ENCODE measurements at regions of chr1 and their contacts with region 1.

Region 1: DNA sequence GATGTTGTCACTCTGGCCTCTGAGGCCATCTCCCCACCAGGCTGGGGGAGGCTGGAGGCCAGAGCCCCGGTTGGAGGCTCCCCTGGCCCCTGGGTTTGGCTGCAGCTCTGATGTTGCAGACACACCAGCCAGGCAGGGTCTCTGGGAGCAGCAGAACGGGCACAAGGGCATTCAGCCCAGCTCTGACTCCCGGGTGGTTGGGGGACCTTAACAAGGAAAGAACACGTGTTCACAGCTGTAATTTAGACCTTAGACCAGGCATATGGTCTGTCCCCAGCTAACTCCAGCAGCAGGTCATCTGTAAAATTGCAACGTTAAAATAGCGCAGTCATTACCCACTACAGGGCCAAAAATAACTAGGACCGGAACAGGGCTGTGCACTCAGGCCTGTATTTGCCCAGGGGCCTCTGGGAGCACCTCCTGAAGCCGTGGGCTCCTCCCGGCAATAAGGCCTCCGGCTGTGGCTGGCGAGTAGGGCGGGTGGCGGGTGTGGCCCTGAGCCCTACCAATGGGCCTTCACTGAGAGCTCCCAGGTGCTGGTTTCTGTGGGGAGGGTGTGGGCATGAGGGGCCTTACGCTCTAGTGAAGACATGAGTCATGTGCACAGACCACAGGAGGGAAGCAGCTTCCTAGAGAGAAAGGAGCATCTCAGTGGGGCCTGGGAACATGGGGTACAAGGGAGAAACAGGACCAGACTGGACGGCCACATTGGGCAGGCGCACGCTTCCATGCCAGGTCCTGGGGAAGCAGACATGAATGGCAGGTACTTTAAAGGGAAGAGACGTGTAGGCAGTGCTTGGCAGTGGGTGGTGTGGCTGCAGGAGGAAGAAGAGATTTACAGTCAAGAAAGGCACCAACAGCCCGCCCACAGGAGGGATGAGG is 6.1 kb downstream of the LDLRAP1 start:
- DNase-seq: peak; percentile 64
- H3K4me3 Mint-ChIP-seq: peak overlapping the region; percentile 61
- H3K27ac Mint-ChIP-seq: peak overlapping the region; percentile 80
- H3K4me1 Mint-ChIP-seq: peaks cover 39% of the 10 kb centered on the region
- H3K27me3 Mint-ChIP-seq: peaks cover 13% of the 10 kb centered on the region

Region 2: GRCh38 chr1:25564777-25565574 is 15.5 kb after region 1 on chr1:
- intact Hi-C with region 1: loop called (anchors 2 kb)
- DNase-seq: no peak
- H3K4me3 Mint-ChIP-seq: peak overlapping the region; percentile 40
- H3K27ac Mint-ChIP-seq: no peak overlapping the region
- H3K4me1 Mint-ChIP-seq: peaks cover 56% of the 10 kb centered on the region
- H3K27me3 Mint-ChIP-seq: peaks cover 7% of the 10 kb centered on the region

Region 3: DNA sequence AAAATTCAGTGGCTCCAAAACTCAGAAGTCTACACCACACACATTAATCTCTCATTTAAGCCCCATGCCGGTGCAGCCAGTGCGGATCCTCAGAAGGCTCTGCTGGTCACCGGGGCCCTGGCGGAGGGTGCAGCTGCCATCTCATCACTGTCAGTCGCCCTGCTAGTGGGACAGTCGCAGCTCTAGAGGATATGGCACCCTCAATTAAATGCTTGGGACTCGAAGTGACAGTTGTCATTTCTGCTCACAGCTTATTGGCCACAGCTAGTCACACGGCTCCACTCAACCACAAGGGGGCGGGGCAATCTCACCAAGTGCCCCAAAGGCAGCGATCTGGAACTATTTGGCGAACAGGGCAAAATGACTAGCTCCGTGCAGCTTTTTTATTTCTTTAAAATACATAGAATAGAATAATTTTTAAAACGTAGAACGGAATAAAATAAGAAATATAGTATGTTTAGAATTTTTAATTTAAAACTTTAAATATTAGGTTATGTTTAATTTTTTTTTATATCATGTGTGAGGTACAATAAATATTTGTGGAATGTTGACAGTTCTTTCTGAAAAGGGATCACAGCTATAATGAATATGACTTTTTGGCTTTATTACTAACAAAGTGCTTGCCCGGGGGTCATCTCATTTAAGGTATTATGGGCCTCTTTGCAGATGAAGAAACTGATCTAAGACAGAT is 59.1 kb after region 1 on chr1:
- intact Hi-C with region 1: loop called (anchors 2 kb)
- DNase-seq: peak; percentile 76
- H3K4me3 Mint-ChIP-seq: no peak overlapping the region
- H3K27ac Mint-ChIP-seq: no peak overlapping the region
- H3K4me1 Mint-ChIP-seq: no peaks in the 10 kb centered on the region
- H3K27me3 Mint-ChIP-seq: peaks cover 71% of the 10 kb centered on the region

Measured in activated T-helper 1 cell treated with anti-CD3 and anti-CD28 coated beads, Interleukin-12 subunit alpha, Interleukin-12 subunit beta, Interleukin-2, Interleukin-4 antibody, amounts not matched to agents 30 ng/mL and 10 ng/mL and 1 ng/mL, durations not matched to agents 14 hours and 24 hours and 36 hours (primary cell).